Activated T-helper 2 cell treated with anti-CD3 and anti-CD28 coated beads, Interferon-gamma antibody, Interleukin-2, Interleukin-4, amounts not matched to agents 10 μg/mL and 5 μg/mL and 100 μg/mL, durations not matched to agents 14 hours and 24 hours and 36 hours (primary cell): ENCODE measurements at regions of chr15 and their contacts with region 1.

Region 1: GRCh38 chr15:87193481-87193880 is 1063.1 kb downstream of the NTRK3 start:
- DNase-seq: no peak
- H3K4me3 Mint-ChIP-seq: no peak overlapping the region
- H3K27ac Mint-ChIP-seq: no peak overlapping the region
- H3K4me1 Mint-ChIP-seq: no peaks in the 10 kb centered on the region
- H3K27me3 Mint-ChIP-seq: no peaks in the 10 kb centered on the region

Region 2: GRCh38 chr15:87080547-87080946 is 112.9 kb before region 1 on chr15:
- intact Hi-C with region 1: no loop called
- DNase-seq: no peak
- H3K4me3 Mint-ChIP-seq: no peak overlapping the region
- H3K27ac Mint-ChIP-seq: no peak overlapping the region
- H3K4me1 Mint-ChIP-seq: no peaks in the 10 kb centered on the region
- H3K27me3 Mint-ChIP-seq: no peaks in the 10 kb centered on the region

Region 3: DNA sequence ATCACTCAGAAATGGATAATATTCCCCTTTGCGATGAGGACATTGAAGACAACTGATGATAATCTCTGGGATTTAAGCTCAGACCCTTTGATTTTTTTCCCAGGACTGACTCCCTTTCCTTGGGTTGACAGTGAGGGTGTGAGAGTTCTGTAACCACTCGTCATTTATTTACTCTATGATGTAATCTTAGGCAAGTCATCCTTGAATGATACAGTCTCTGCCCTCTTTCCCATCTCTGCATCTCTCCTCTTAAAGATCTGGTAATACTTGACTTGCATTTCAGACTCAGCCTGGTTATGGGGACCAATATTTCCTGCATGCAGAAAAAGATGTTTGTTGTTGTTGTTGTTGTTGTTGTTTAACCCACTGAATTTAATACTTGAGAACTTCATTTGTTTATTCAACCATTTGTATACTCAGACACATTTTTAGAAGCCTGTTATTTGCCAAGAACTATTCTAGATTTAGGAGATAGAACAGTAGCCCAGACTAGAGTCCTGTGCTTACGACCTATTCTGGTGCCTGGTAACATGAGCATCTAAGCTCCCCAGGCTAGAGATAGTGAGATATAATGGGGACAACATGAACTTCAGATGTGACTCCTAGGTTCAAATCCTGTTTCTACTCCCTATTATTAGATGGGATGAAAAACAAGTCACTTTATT is 72.0 kb before region 1 on chr15:
- intact Hi-C with region 1: loop called (anchors 10 kb)
- DNase-seq: no peak
- H3K4me3 Mint-ChIP-seq: no peak overlapping the region
- H3K27ac Mint-ChIP-seq: no peak overlapping the region
- H3K4me1 Mint-ChIP-seq: no peaks in the 10 kb centered on the region
- H3K27me3 Mint-ChIP-seq: no peaks in the 10 kb centered on the region

Region 4: DNA sequence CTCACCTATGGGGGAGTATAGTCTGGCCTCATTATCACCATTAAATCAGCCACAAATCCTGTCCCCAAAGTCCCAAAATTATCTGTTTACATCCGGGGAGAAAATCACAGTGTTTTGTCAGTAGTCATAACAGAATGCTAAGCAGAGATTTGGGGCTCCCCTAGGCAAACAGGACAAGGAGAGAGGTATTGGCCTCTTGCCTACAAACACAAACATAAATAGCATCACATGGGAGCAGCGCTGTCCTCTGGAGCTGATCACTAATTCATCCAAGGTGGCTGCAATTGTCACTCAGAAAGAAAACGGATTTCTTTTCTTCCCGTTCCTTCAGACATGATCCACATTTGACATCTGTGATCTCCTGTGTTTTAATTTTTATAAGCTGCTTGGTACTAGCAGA is 35.0 kb after region 1 on chr15:
- intact Hi-C with region 1: no loop called
- DNase-seq: no peak
- H3K4me3 Mint-ChIP-seq: no peak overlapping the region
- H3K27ac Mint-ChIP-seq: no peak overlapping the region
- H3K4me1 Mint-ChIP-seq: no peaks in the 10 kb centered on the region
- H3K27me3 Mint-ChIP-seq: no peaks in the 10 kb centered on the region

Region 5: DNA sequence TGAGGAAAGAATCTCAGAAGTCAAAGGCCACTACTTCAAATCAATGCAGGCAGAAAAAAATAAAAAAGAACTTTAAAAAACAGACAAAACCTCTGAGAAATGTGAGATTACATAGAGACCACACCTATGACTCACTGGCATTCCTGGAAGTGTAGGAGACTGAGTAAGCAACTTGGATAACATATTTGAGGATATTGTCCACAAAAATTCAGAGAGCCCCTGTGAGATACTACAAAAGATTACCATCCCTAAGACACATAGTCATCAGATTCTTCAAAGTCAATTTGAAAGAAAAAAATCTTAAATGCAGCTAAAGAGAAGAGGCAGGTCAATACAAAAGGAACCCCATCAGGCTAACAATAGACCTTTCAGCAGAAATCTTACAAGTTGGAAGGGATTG is 175.8 kb after region 1 on chr15:
- intact Hi-C with region 1: no loop called
- DNase-seq: no peak
- H3K4me3 Mint-ChIP-seq: no peak overlapping the region
- H3K27ac Mint-ChIP-seq: no peak overlapping the region
- H3K4me1 Mint-ChIP-seq: no peaks in the 10 kb centered on the region
- H3K27me3 Mint-ChIP-seq: no peaks in the 10 kb centered on the region